ENCODE measurements at regions of chr3 and their contacts with region 1.

Region 1: GRCh38 chr3:57544181-57545125 is at the start of gene DNAH12:
- DNase-seq: no peak
- total RNA-seq, gene DNAH12: 0.05 to 0.19 TPM

Region 2: DNA sequence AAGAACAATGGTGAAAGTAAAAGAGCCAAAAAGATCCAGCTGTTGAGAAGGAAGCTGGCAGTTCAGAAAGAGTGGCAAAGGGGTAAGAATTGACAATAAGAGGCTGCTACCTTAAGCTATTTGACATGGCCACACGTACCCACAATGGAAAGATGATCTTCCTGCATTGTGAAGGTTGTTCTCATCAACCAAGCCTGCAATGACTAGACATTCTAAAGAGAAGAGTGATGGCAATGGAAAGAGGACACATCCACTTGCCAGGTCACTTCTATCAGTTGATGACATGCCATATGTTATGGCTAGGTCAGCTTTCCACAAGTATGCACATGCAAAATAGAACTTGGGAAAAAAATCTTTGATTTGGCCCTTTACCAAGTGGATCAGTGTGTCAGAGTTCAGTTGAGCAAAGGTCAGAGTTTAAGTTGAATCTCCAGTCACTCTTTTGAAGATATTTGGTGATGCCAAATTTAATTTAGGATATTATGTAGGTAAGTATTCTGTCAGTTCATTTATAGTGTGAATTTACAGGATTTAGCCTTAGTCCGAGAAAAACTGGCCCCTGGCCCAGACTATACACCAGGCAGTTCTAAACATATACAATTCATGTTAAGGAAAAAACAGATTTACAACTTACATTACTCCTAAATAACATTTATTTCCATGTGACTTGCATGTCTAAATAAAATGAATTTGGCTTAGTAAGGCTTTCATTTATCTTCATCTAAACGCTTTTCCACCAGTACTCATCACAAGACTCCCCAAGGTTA is 358.9 kb after region 1 on chr3:
- intact Hi-C with region 1: loop called in 1 of 2 experiments (anchors 5 kb)
- DNase-seq: no peak

Measured in posterior vena cava (tissue), 2 donors.